CD8-positive, alpha-beta T cell (primary cell): ENCODE measurements at regions of chr11 and their contacts with region 1.

Region 1: GRCh38 chr11:114180301-114181055 is 115.7 kb upstream of the NNMT start:
- DNase-seq: peak in 4 of 9 experiments; percentile 39 to 59 (median 50)
- ATAC-seq: no peak
- H3K4me3 ChIP-seq: no peak overlapping the region
- H3K4me3 Mint-ChIP-seq: peak overlapping the region; percentile 12
- H3K27ac ChIP-seq: no peak overlapping the region
- H3K27ac Mint-ChIP-seq: peak overlapping the region; percentile 46
- H3K4me1 ChIP-seq: peaks cover 64% of the 10 kb centered on the region
- H3K4me1 Mint-ChIP-seq: peaks cover 77% of the 10 kb centered on the region
- H3K27me3 ChIP-seq: no peaks in the 10 kb centered on the region
- H3K27me3 Mint-ChIP-seq: no peaks in the 10 kb centered on the region
- CTCF ChIP-seq: peak; percentile 36

Region 2: DNA sequence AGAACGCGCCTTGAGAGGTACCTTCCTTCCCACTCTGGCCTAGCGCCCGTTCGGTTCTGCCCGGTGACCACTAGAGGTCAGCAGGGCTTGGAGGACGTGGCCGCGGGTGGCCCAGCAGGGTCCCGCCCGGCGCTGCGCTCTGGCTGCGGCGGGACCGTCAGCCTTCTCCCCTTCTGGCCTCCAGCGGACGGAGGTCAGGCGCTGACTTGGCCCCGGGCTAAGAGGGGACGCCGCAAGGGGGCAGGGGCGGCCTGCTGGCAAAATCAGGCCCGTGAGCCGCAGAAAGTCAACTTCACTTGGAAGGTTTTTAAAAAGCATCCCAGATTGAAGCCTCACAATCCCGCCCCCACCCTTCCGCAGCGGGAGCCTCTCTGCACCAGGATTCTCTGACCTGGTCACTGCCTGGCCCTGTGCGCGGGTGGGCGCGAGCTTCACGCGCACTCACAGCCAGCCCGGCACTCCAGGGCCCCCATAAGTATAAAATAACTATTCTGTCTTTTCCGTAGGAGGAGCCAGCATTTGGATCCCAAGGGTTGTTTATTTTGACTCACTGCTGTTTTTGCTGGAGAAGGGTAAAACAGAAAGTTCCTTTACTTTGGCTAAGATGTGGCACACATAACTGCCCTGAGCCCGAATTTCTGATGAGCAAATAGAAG is 144.2 kb before region 1 on chr11:
- CTCF ChIA-PET with region 1: interaction called, 21 read pairs
- POLR2A ChIA-PET with region 1: no interaction called
- intact Hi-C with region 1: loop called in 1 of 2 experiments (anchors 1 kb)
- DNase-seq: peak; percentile 7 to 80 (median 56)
- ATAC-seq: peak; percentile 54
- H3K4me3 ChIP-seq: no peak overlapping the region
- H3K4me3 Mint-ChIP-seq: no peak overlapping the region
- H3K27ac ChIP-seq: no peak overlapping the region
- H3K27ac Mint-ChIP-seq: no peak overlapping the region
- H3K4me1 ChIP-seq: peaks cover 9% of the 10 kb centered on the region
- H3K4me1 Mint-ChIP-seq: peaks cover 3% of the 10 kb centered on the region
- H3K27me3 ChIP-seq: peaks cover 0 to 3% of the 10 kb centered on the region in 2 experiments
- H3K27me3 Mint-ChIP-seq: peaks cover 7% of the 10 kb centered on the region
- CTCF ChIP-seq: peak; percentile 59

Region 3: GRCh38 chr11:114075891-114076441 is 104.5 kb before region 1 on chr11:
- CTCF ChIA-PET with region 1: interaction called, 11 read pairs
- POLR2A ChIA-PET with region 1: interaction called, 7 read pairs
- intact Hi-C with region 1: loop called in 1 of 2 experiments (anchors 5 kb)
- DNase-seq: peak in 6 of 9 experiments; percentile 31 to 75 (median 57)
- ATAC-seq: peak; percentile 16
- H3K4me3 ChIP-seq: no peak overlapping the region
- H3K4me3 Mint-ChIP-seq: peak overlapping the region; percentile 40
- H3K27ac ChIP-seq: peak overlapping the region in 1 of 2 experiments; percentile 64
- H3K27ac Mint-ChIP-seq: peak overlapping the region; percentile 38
- H3K4me1 ChIP-seq: peaks cover 48% of the 10 kb centered on the region
- H3K4me1 Mint-ChIP-seq: peaks cover 76% of the 10 kb centered on the region
- H3K27me3 ChIP-seq: no peaks in the 10 kb centered on the region
- H3K27me3 Mint-ChIP-seq: no peaks in the 10 kb centered on the region
- CTCF ChIP-seq: peak; percentile 56

Region 4: DNA sequence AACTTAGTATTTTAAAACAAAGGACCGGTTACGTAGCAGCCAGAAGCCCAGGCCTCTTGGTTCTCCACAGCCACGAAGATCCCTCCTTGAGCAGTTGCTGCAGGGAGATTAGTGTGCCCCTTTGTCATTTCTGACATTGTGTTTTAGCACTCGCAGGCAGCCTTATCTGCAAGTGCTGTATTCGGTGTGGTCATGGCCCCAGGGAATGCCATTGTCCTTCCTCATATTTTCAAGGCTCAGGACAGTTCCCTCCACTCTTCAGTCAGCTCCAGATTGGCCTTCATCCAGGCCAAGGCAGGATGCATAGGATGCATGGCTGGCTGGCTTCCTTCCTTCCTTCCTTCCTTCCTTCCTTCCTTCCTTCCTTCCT is 32.5 kb before region 1 on chr11:
- CTCF ChIA-PET with region 1: no interaction called
- POLR2A ChIA-PET with region 1: interaction called, 3 read pairs
- intact Hi-C with region 1: loop called in 1 of 2 experiments (anchors 5 kb)
- DNase-seq: no peak
- ATAC-seq: no peak
- H3K4me3 ChIP-seq: no peak overlapping the region
- H3K4me3 Mint-ChIP-seq: no peak overlapping the region
- H3K27ac ChIP-seq: no peak overlapping the region
- H3K27ac Mint-ChIP-seq: no peak overlapping the region
- H3K4me1 ChIP-seq: peaks cover 3% of the 10 kb centered on the region
- H3K4me1 Mint-ChIP-seq: peaks cover 37% of the 10 kb centered on the region
- H3K27me3 ChIP-seq: no peaks in the 10 kb centered on the region
- H3K27me3 Mint-ChIP-seq: no peaks in the 10 kb centered on the region
- CTCF ChIP-seq: no peak

Region 5: DNA sequence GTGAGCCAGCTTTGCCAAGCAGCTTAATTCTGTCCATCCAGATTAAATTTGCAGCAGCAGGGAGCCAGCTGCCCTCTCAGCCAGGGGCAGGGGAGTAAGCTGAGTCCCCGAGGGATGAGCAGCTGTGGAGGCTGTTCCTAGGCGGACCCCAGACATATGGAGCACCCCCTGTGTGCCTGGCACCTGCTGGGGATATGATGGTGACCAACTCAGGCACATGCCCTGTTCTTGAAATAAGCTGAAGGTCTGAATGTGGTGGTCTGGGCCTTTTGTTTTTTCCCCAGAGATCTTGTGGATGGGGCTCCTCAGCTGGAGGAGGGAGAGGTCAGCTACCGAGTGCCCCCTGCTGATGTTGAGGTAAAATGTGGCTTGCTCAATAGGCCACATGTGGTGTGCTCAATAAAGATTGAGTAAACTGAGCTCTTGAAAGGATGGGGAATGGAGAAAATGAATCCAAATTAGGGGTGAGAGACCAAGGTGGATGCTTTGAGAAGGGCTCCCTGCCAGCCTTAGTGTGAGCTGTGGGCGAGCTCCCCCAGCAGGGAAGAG is 12.4 kb after region 1 on chr11:
- CTCF ChIA-PET with region 1: interaction called, 83 read pairs
- POLR2A ChIA-PET with region 1: interaction called, 26 read pairs
- intact Hi-C with region 1: loop called in 1 of 2 experiments (anchors 1 kb)
- DNase-seq: peak in 2 of 9 experiments; percentile 24 to 31
- ATAC-seq: no peak
- H3K4me3 ChIP-seq: no peak overlapping the region
- H3K4me3 Mint-ChIP-seq: no peak overlapping the region
- H3K27ac ChIP-seq: no peak overlapping the region
- H3K27ac Mint-ChIP-seq: no peak overlapping the region
- H3K4me1 ChIP-seq: no peaks in the 10 kb centered on the region
- H3K4me1 Mint-ChIP-seq: peaks cover 44% of the 10 kb centered on the region
- H3K27me3 ChIP-seq: no peaks in the 10 kb centered on the region
- H3K27me3 Mint-ChIP-seq: no peaks in the 10 kb centered on the region
- CTCF ChIP-seq: no peak

Region 6: DNA sequence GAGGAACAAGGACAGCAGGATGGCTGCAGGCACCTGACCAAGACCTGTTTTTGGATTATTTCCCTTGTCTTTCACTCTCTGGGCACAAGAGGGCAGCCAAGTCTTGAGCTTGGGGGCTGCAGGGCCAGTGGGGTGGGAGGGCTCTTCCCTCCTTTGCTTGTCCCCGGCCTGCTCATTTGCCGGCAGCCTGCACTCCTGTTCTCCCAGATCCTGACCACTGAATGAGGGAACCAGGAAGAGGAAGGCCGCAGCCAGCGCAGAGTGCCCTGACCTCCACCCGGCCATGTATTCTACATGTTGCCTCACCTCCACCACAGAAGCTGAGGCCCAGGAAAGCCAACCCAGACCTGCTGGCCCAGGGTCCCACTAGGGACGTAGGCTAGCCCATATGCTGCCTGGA is 100.2 kb after region 1 on chr11:
- CTCF ChIA-PET with region 1: no interaction called
- POLR2A ChIA-PET with region 1: no interaction called
- intact Hi-C with region 1: no loop called
- DNase-seq: no peak
- ATAC-seq: no peak
- H3K4me3 ChIP-seq: no peak overlapping the region
- H3K4me3 Mint-ChIP-seq: no peak overlapping the region
- H3K27ac ChIP-seq: no peak overlapping the region
- H3K27ac Mint-ChIP-seq: no peak overlapping the region
- H3K4me1 ChIP-seq: no peaks in the 10 kb centered on the region
- H3K4me1 Mint-ChIP-seq: no peaks in the 10 kb centered on the region
- H3K27me3 ChIP-seq: no peaks in the 10 kb centered on the region
- H3K27me3 Mint-ChIP-seq: peaks cover 23% of the 10 kb centered on the region
- CTCF ChIP-seq: peak; percentile 22